CD8-positive, alpha-beta T cell (primary cell): ENCODE measurements at regions of chr17 and their contacts with region 1.

Region 1: DNA sequence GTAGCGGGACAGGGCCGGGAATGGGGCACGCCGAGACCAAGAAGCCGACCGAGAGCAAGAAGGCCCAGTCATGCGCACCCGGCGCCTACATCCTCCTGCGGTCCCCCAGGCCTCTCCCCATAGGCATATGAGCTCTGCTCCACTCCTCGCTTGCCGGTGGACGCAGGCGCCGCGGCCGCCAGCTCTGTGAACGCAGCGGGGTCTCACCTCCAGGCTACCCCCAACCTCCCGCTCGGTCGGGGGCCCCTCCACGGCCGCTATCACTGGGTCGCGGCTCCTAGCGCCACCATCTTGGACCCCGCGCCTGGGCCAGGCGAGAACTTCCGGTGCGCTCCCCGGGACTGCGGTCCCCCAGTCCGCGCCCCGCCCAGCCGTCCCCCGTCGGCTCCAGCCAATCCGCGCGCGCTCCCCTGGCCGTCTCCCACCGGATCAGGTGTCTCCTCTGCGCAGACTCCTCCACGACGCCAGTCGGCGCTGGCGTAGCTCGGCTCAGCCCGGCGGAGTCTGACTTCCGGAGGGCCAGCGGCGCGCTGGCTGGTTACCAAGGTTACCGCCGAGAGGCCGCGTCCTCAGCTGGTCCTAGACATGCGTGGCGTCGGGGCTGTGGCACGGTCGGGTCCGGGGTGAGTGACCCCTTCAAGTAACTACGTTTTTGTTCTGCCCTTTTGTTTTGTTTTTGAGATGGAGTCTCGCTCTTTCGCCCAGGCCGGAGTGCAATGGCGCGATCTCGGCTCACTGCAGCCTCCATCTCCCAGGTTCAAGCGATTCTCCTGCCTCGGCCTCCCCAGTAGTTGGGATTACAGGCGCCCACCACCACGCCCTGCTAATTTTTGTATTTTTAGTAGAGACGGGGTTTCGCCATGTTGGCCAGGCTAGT is at the start of gene ZNF594:
- DNase-seq: peak; percentile 96 to 99 (median 98)
- ATAC-seq: peak; percentile 99
- H3K4me3 ChIP-seq: peak within 1 kb of the TSS; percentile 79 to 91
- H3K4me3 Mint-ChIP-seq: peak within 1 kb of the TSS; percentile 93
- H3K27ac ChIP-seq: peak within 1 kb of the TSS; percentile 77 to 88
- H3K27ac Mint-ChIP-seq: peak within 1 kb of the TSS; percentile 93
- H3K4me1 ChIP-seq: peaks cover 21% of the 10 kb centered on the region
- H3K4me1 Mint-ChIP-seq: peaks cover 31% of the 10 kb centered on the region
- H3K27me3 ChIP-seq: no peaks in the 10 kb centered on the region
- H3K27me3 Mint-ChIP-seq: no peaks in the 10 kb centered on the region
- CTCF ChIP-seq: peak; percentile 68
- total RNA-seq, gene ZNF594: 3.2 to 3.3 TPM

Region 2: GRCh38 chr17:4263282-4264215 is 928.2 kb before region 1 on chr17 and contains the start of gene ANKFY1:
- CTCF ChIA-PET with region 1: no interaction called
- POLR2A ChIA-PET with region 1: no interaction called
- intact Hi-C with region 1: loop called in 1 of 2 experiments (anchors 5 kb)
- DNase-seq: peak; percentile 95 to 98 (median 97)
- ATAC-seq: peak; percentile 95
- H3K4me3 ChIP-seq: peak within 1 kb of the TSS; percentile 86 to 99
- H3K4me3 Mint-ChIP-seq: peak within 1 kb of the TSS; percentile 90
- H3K27ac ChIP-seq: peak within 1 kb of the TSS; percentile 81 to 88
- H3K27ac Mint-ChIP-seq: peak within 1 kb of the TSS; percentile 91
- H3K4me1 ChIP-seq: peaks cover 21% of the 10 kb centered on the region
- H3K4me1 Mint-ChIP-seq: peaks cover 40% of the 10 kb centered on the region
- H3K27me3 ChIP-seq: no peaks in the 10 kb centered on the region
- H3K27me3 Mint-ChIP-seq: no peaks in the 10 kb centered on the region
- CTCF ChIP-seq: no peak
- total RNA-seq, gene ANKFY1: 26.2 to 28.6 TPM

Region 3: DNA sequence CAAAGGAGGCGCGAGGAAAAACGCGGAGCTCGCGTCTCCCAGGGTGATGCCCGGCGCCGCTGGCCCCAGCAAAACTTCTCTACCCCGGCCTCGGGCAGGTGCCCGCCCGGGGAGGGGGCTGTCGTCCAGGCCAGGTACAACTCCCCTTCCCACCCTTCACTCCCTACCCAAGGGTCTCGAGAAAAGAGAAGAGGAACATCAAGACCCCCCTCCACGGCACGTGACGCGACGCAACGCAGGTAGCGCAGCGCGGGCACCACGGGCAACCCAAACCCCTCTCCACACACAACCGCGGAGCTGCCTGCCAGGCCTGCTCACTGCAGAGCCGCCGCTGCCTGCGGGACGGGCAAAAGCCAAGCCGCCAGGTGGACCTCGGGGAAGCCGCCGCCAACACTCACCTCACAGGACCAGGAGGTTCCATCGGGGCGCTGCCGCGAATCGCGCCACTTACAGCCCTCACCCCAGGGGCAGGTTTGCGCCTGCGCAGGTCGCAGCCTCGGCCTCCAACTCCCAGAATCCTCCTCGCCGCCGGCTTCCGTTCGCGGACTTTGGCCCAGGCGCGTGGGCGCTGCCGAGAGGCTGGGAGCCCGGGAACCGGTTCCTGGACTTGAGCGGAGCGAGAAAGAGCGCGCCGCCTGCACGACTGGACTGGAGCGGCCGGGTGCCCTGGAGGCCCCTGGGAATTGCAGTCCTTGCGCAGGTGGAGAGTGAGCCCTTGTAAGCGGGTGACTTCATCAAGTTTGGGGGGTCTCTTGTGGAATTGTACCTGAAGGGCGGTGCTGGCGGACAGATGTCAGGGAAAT is 80.2 kb before region 1 on chr17 and contains the start of gene ZNF232:
- CTCF ChIA-PET with region 1: interaction called, 3 read pairs
- POLR2A ChIA-PET with region 1: interaction called, 6 read pairs
- intact Hi-C with region 1: loop called (anchors 1 kb)
- DNase-seq: peak; percentile 72 to 94 (median 88)
- ATAC-seq: peak; percentile 89
- H3K4me3 ChIP-seq: peak within 1 kb of the TSS; percentile 90 to 97
- H3K4me3 Mint-ChIP-seq: peak within 1 kb of the TSS; percentile 91
- H3K27ac ChIP-seq: peak within 1 kb of the TSS; percentile 60 to 77
- H3K27ac Mint-ChIP-seq: peak within 1 kb of the TSS; percentile 79
- H3K4me1 ChIP-seq: peaks cover 11% of the 10 kb centered on the region
- H3K4me1 Mint-ChIP-seq: peaks cover 30% of the 10 kb centered on the region
- H3K27me3 ChIP-seq: peaks cover 0 to 14% of the 10 kb centered on the region in 2 experiments
- H3K27me3 Mint-ChIP-seq: peaks cover 15% of the 10 kb centered on the region
- CTCF ChIP-seq: no peak
- total RNA-seq, gene ZNF232: 5.7 to 6.1 TPM

Region 4: DNA sequence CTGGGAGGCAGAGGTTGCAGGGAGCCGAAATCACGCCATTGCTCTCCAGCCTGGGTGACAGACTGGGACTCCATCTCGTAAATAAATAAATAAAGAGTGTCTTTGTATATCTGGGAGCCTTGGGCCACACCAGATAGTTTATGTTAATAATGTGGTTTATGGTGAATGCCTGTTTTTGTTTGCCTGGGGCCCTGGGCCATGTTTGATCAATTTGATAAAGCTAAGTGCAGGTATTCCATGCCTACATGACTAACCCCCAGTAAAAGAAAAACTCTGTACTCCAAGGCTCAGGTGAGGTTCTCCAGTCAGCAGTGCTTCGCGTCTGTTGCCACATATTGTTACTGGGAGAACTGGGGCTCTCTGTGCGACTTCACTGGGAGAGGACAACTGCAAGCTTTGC is 27.8 kb after region 1 on chr17:
- CTCF ChIA-PET with region 1: no interaction called
- POLR2A ChIA-PET with region 1: no interaction called
- intact Hi-C with region 1: no loop called
- DNase-seq: no peak
- ATAC-seq: no peak
- H3K4me3 ChIP-seq: no peak overlapping the region
- H3K4me3 Mint-ChIP-seq: no peak overlapping the region
- H3K27ac ChIP-seq: peak overlapping the region in 1 of 2 experiments; percentile 50
- H3K27ac Mint-ChIP-seq: peak overlapping the region; percentile 8
- H3K4me1 ChIP-seq: peaks cover 28% of the 10 kb centered on the region
- H3K4me1 Mint-ChIP-seq: peaks cover 24% of the 10 kb centered on the region
- H3K27me3 ChIP-seq: no peaks in the 10 kb centered on the region
- H3K27me3 Mint-ChIP-seq: no peaks in the 10 kb centered on the region
- CTCF ChIP-seq: no peak

Region 5: DNA sequence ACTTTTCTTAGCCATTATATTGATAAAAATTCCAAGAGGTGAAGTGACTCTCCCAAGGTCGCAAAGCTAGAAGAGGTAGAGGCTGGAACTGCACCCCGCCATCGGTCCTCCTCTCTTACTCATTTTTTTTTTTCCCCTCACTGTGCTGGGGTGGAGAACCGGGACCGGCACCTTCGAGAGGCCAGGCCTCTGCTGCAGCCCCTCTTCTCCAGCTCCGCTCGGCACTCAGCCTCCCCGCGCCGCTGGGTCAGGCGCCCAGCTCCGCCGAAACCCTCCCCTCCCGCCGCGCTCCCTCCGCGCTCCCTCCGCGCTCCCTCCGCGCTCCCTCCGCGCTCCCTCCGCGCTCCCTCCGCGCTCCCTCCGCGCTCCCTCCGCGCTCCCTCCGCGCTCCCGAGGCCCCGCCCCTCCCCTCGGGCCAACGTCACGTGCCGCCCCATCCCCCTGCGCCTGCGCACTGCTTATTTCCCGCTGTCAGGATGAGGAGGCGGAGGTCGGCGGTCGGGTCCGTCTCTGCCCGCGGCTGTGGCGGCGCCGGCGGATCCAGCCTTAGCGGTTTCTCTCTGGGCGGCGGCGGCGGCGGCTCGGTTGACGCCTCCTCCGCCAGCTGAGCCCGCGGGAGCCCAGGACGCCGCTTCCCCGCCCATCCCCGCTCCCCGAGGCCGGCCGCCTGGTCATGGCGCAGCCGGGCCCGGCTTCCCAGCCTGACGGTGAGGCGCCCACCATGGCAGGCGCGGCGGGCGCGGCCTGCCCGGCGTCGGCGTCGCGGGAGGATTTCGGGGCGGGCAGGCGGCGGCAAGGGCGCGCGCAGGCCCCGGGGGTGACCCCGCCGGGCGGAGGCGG is 90.3 kb after region 1 on chr17 and contains the start of gene RABEP1:
- CTCF ChIA-PET with region 1: no interaction called
- POLR2A ChIA-PET with region 1: interaction called, 3 read pairs
- intact Hi-C with region 1: loop called (anchors 1 kb)
- DNase-seq: peak; percentile 85 to 97 (median 95)
- ATAC-seq: peak; percentile 81
- H3K4me3 ChIP-seq: peak within 1 kb of the TSS; percentile 61 to 63
- H3K4me3 Mint-ChIP-seq: peak within 1 kb of the TSS; percentile 93
- H3K27ac ChIP-seq: peak within 1 kb of the TSS; percentile 60 to 61
- H3K27ac Mint-ChIP-seq: peak within 1 kb of the TSS; percentile 93
- H3K4me1 ChIP-seq: peaks cover 41% of the 10 kb centered on the region
- H3K4me1 Mint-ChIP-seq: peaks cover 38% of the 10 kb centered on the region
- H3K27me3 ChIP-seq: no peaks in the 10 kb centered on the region
- H3K27me3 Mint-ChIP-seq: no peaks in the 10 kb centered on the region
- CTCF ChIP-seq: no peak
- total RNA-seq, gene RABEP1: 27.1 to 27.6 TPM

Region 6: GRCh38 chr17:5468075-5468473 is 276.3 kb after region 1 on chr17:
- CTCF ChIA-PET with region 1: no interaction called
- POLR2A ChIA-PET with region 1: no interaction called
- intact Hi-C with region 1: loop called in 1 of 2 experiments (anchors 1 kb)
- DNase-seq: peak in 4 of 9 experiments; percentile 9 to 45 (median 18)
- ATAC-seq: peak; percentile 16
- H3K4me3 ChIP-seq: peak overlapping the region; percentile 78 to 84
- H3K4me3 Mint-ChIP-seq: peak overlapping the region; percentile 81
- H3K27ac ChIP-seq: peak overlapping the region; percentile 49 to 53
- H3K27ac Mint-ChIP-seq: peak overlapping the region; percentile 46
- H3K4me1 ChIP-seq: peaks cover 10% of the 10 kb centered on the region
- H3K4me1 Mint-ChIP-seq: peaks cover 31% of the 10 kb centered on the region
- H3K27me3 ChIP-seq: no peaks in the 10 kb centered on the region
- H3K27me3 Mint-ChIP-seq: no peaks in the 10 kb centered on the region
- CTCF ChIP-seq: no peak

Region 7: DNA sequence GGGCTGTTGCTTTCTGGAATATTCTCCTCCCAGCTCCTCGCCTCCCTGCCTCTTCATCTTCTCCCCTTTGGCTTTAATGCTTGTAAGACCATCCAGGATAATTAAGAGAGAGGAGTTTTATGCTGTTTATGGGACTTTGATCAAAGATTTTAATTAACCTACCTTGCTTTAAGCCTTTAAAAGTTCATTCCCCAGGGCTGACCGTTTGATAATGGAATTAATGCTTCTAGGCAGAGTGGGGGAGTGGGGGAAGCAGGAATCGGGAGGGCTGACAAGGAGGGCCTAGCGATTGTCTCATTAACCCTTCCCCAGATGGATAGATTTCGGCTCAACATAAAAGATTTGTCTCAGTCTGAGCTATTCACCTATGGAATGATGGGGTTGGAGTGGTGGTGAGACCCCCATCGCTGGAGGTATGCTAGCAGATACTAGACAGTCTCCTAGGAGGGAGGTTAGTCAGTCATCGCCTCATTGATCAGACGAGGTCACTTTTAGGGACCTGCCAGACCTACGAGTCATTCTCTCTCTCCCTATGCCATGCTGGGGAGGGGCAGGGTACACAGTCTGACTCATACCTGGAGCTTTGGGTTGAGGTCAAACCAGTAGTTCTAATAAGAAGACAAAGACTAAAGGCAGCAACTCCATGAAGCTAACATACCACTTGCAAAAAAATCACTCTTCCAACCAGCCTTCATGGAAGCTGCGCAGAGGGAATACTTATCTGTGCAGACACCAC is 629.1 kb after region 1 on chr17:
- CTCF ChIA-PET with region 1: no interaction called
- POLR2A ChIA-PET with region 1: no interaction called
- intact Hi-C with region 1: no loop called
- DNase-seq: no peak
- ATAC-seq: no peak
- H3K4me3 ChIP-seq: no peak overlapping the region
- H3K4me3 Mint-ChIP-seq: no peak overlapping the region
- H3K27ac ChIP-seq: no peak overlapping the region
- H3K27ac Mint-ChIP-seq: no peak overlapping the region
- H3K4me1 ChIP-seq: no peaks in the 10 kb centered on the region
- H3K4me1 Mint-ChIP-seq: no peaks in the 10 kb centered on the region
- H3K27me3 ChIP-seq: peaks cover 0 to 2% of the 10 kb centered on the region in 2 experiments
- H3K27me3 Mint-ChIP-seq: peaks cover 26% of the 10 kb centered on the region
- CTCF ChIP-seq: no peak